ENCODE measurements at regions of chr17 and their contacts with region 1.

Region 1: GRCh38 chr17:66673668-66674315 is 161.1 kb upstream of the CACNG5 start:
- DNase-seq: peak; percentile 72
- ATAC-seq: peak; percentile 74
- H3K4me3 ChIP-seq: no peak overlapping the region
- H3K27ac ChIP-seq: no peak overlapping the region
- H3K4me1 ChIP-seq: peaks cover 19 to 23% of the 10 kb centered on the region in 2 experiments
- H3K27me3 ChIP-seq: no peaks in the 10 kb centered on the region
- CTCF ChIP-seq: peak; percentile 84 to 98 (median 86)
- POLR2A ChIP-seq: no peak
- RAD21 ChIP-seq: peak; percentile 98

Region 2: DNA sequence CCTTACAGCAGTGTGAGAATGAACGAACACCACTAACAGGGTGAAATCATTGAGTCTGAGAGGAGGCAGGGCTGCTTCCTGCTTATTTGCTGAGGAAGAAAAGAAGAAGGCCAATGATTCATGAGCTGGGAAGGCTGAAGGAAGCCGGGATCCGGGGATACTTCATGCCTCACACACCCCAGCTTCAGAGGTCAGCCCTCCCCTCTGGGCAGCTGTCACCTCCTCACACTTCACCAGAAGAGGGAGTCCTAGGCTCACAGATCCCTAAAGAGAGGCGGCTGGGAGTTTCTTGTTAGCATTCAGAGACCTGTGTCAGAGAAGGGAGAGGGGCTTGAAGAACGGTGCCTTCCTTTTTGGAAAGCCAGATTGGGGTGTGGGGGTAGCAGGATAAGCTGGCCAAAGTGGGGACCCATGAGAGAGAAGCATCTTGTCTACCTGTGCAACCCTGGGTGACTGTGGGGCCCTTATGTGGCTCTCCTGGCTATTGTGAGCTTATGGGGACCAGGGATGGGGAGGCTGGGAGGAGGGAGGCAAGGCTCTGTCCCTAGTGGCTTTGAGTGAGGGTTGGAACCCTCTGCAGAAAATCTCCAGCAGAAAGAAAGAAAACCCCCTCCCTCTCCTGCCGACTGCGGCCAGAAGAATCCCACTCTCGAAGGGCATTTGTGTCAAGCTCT is 1442.0 kb before region 1 on chr17:
- CTCF ChIA-PET with region 1: no interaction called
- POLR2A ChIA-PET with region 1: no interaction called
- RAD21 ChIA-PET with region 1: no interaction called
- intact Hi-C with region 1: loop called (anchors 2 kb)
- DNase-seq: peak; percentile 74
- ATAC-seq: peak; percentile 92
- H3K4me3 ChIP-seq: no peak overlapping the region
- H3K27ac ChIP-seq: no peak overlapping the region
- H3K4me1 ChIP-seq: peaks cover 24 to 32% of the 10 kb centered on the region in 2 experiments
- H3K27me3 ChIP-seq: no peaks in the 10 kb centered on the region
- CTCF ChIP-seq: peak; percentile 88 to 97 (median 95)
- POLR2A ChIP-seq: no peak
- RAD21 ChIP-seq: peak; percentile 98

Region 3: GRCh38 chr17:66200685-66201092 is 473.1 kb before region 1 on chr17:
- CTCF ChIA-PET with region 1: interaction called, 47 read pairs
- POLR2A ChIA-PET with region 1: no interaction called
- RAD21 ChIA-PET with region 1: interaction called, 4 to 18 read pairs
- intact Hi-C with region 1: loop called (anchors 1 kb)
- DNase-seq: peak; percentile 89
- ATAC-seq: peak; percentile 80
- H3K4me3 ChIP-seq: no peak overlapping the region
- H3K27ac ChIP-seq: no peak overlapping the region
- H3K4me1 ChIP-seq: peaks cover 0 to 7% of the 10 kb centered on the region in 2 experiments; a peak in 1 of 4 replicates
- H3K27me3 ChIP-seq: no peaks in the 10 kb centered on the region
- CTCF ChIP-seq: peak; percentile 88 to 95 (median 88)
- POLR2A ChIP-seq: no peak
- RAD21 ChIP-seq: peak; percentile 97

Region 4: DNA sequence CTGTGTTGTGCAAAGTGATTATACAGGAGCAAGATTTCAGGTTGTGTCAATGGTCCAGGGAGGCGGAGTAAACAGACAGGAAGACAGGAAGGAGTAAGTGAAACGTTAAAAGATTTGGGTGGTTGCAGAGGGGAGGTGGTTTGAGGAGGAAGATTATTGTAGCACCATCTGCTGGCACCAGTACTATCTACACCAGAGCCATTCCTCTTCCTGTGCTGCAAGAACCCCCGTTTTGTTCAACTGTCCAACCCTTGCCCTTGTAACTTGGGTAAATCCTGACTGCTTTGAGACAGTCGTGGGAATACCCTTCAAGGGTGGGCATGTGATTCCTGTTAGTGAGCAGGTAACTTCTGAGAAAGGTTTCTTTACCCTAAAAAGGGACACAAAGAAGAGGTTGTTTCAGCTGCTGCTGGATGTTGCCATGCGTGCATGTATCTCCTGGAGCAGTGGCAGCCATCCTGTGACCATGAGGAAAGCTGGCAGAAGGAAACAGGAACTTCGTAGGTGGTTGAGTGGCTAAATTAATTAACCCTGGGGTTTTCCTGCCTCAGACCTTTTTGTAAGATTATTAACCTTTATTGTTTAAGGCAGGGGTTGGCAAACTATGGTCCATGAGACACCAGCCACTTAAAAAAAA is 247.3 kb before region 1 on chr17:
- CTCF ChIA-PET with region 1: no interaction called
- POLR2A ChIA-PET with region 1: no interaction called
- RAD21 ChIA-PET with region 1: no interaction called
- intact Hi-C with region 1: loop called (anchors 10 kb)
- DNase-seq: peak; percentile 31
- ATAC-seq: peak; percentile 98
- H3K4me3 ChIP-seq: no peak overlapping the region
- H3K27ac ChIP-seq: no peak overlapping the region
- H3K4me1 ChIP-seq: peaks cover 0 to 7% of the 10 kb centered on the region in 2 experiments; a peak in 1 of 4 replicates
- H3K27me3 ChIP-seq: no peaks in the 10 kb centered on the region
- CTCF ChIP-seq: peak; percentile 54 to 65 (median 63)
- POLR2A ChIP-seq: no peak
- RAD21 ChIP-seq: peak; percentile 76

Region 5: GRCh38 chr17:66496306-66496705 is 177.5 kb before region 1 on chr17:
- CTCF ChIA-PET with region 1: no interaction called
- POLR2A ChIA-PET with region 1: no interaction called
- RAD21 ChIA-PET with region 1: no interaction called
- intact Hi-C with region 1: no loop called
- DNase-seq: no peak
- ATAC-seq: no peak
- H3K4me3 ChIP-seq: no peak overlapping the region
- H3K27ac ChIP-seq: no peak overlapping the region
- H3K4me1 ChIP-seq: peaks cover 23 to 30% of the 10 kb centered on the region in 2 experiments
- H3K27me3 ChIP-seq: no peaks in the 10 kb centered on the region
- CTCF ChIP-seq: no peak
- POLR2A ChIP-seq: no peak
- RAD21 ChIP-seq: no peak

Region 6: DNA sequence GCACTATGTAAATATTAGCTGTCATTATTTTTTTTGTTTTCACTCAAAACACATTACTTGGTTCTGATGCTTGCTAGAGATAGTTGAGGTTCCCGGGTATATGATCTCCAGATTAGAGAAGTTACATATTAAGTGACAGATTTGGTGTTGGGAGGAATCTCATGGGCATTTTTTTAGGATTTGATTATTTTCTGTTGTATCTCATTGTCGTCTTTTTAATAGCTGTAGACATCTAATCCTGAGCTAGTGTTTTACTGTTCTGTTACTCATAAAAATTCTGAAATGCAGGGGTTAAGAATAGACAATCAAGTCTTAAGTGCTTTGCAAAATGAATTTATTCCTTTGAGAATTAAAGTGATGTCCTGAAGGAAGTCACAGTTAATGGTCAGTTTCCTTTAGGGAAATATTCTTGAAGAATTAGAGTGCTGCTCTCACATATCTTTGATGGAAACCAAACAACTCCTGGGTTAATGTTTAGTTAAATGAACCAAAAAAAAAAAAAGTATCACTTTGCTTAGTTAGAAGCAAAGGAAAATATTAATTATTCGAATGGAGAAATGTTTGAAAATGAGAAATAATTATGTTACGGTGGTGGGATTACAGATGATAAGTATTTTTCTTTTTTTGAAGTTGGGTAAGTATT is 90.6 kb before region 1 on chr17:
- CTCF ChIA-PET with region 1: no interaction called
- POLR2A ChIA-PET with region 1: no interaction called
- RAD21 ChIA-PET with region 1: no interaction called
- intact Hi-C with region 1: no loop called
- DNase-seq: no peak
- ATAC-seq: no peak
- H3K4me3 ChIP-seq: no peak overlapping the region
- H3K27ac ChIP-seq: no peak overlapping the region
- H3K4me1 ChIP-seq: peaks cover 11 to 14% of the 10 kb centered on the region in 2 experiments
- H3K27me3 ChIP-seq: no peaks in the 10 kb centered on the region
- CTCF ChIP-seq: no peak
- POLR2A ChIP-seq: no peak
- RAD21 ChIP-seq: no peak

Region 7: GRCh38 chr17:66625311-66625775 is 48.4 kb before region 1 on chr17:
- CTCF ChIA-PET with region 1: interaction called, 5 read pairs
- POLR2A ChIA-PET with region 1: no interaction called
- RAD21 ChIA-PET with region 1: no interaction called
- intact Hi-C with region 1: loop called (anchors 2 kb)
- DNase-seq: peak; percentile 42
- ATAC-seq: peak; percentile 89
- H3K4me3 ChIP-seq: no peak overlapping the region
- H3K27ac ChIP-seq: no peak overlapping the region
- H3K4me1 ChIP-seq: no peaks in the 10 kb centered on the region
- H3K27me3 ChIP-seq: no peaks in the 10 kb centered on the region
- CTCF ChIP-seq: peak; percentile 51 to 80 (median 77)
- POLR2A ChIP-seq: no peak
- RAD21 ChIP-seq: peak; percentile 88

Region 8: GRCh38 chr17:66702106-66702872 is 28.5 kb after region 1 on chr17:
- CTCF ChIA-PET with region 1: no interaction called
- POLR2A ChIA-PET with region 1: no interaction called
- RAD21 ChIA-PET with region 1: no interaction called
- intact Hi-C with region 1: no loop called
- DNase-seq: no peak
- ATAC-seq: peak; percentile 22; the same call in 1 of the 2 replicates
- H3K4me3 ChIP-seq: no peak overlapping the region
- H3K27ac ChIP-seq: no peak overlapping the region
- H3K4me1 ChIP-seq: no peaks in the 10 kb centered on the region; a peak in 1 of 4 replicates
- H3K27me3 ChIP-seq: no peaks in the 10 kb centered on the region
- CTCF ChIP-seq: no peak
- POLR2A ChIP-seq: no peak
- RAD21 ChIP-seq: no peak